Common myeloid progenitor, CD34-positive (primary cell): ENCODE measurements at regions of chr1 and their contacts with region 1.

Region 1: DNA sequence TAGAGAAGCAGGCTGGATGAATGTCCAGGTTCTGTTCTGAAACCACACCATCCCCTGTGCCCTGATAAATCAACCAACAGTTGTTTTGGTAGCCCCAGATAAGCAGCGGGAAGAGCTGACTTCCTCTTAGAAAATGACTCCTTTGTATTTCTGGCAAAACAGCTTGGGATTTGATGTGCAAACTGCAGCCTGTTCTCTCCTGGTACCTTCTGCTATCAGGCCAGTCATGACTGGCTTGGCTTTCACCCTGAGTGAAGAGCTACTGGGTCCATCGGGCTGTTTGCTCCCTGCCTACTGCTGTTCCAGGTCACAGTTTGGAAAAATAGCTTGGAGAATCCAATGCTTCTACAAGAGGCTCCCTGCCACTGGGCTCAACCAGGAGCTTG is 116.8 kb downstream of the DTL start:
- DNase-seq: peak; percentile 86 to 93 (median 90)
- H3K4me3 ChIP-seq: peak overlapping the region in 2 of 7 experiments; percentile 16 to 30
- H3K27ac ChIP-seq: peak overlapping the region in 1 of 2 experiments; percentile 64
- H3K4me1 ChIP-seq: peaks cover 11 to 35% (median 20%) of the 10 kb centered on the region in 4 experiments
- H3K27me3 ChIP-seq: no peaks in the 10 kb centered on the region

Region 2: GRCh38 chr1:212162635-212163034 is 10.3 kb after region 1 on chr1:
- CTCF ChIA-PET with region 1: interaction called, 22 read pairs
- POLR2A ChIA-PET with region 1: no interaction called
- DNase-seq: peak; percentile 40 to 80 (median 77)
- H3K4me3 ChIP-seq: peak overlapping the region in 3 of 7 experiments; percentile 23 to 59 (median 40)
- H3K27ac ChIP-seq: no peak overlapping the region
- H3K4me1 ChIP-seq: peaks cover 15 to 56% (median 54%) of the 10 kb centered on the region in 4 experiments
- H3K27me3 ChIP-seq: no peaks in the 10 kb centered on the region

Region 3: DNA sequence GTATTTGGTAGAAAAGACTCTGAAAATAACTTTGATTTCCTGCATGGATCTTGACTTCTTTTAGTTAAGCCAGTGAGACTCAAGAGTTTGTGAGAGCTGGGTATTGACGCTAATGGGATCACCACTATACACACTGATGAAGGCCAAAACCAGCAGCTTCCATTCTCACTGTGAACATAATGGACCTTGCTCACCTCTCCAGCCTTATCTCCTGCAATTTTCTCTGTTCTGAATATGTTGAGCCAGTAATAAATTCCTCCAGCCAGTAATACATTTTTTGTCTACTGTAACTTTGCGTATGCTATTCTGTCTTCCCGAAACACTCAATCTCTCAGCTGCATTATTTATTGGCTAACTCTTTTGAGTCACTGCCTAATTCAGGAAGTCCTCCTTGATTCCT is 21.3 kb after region 1 on chr1:
- CTCF ChIA-PET with region 1: no interaction called
- POLR2A ChIA-PET with region 1: no interaction called
- DNase-seq: no peak
- H3K4me3 ChIP-seq: no peak overlapping the region
- H3K27ac ChIP-seq: no peak overlapping the region
- H3K4me1 ChIP-seq: no peaks in the 10 kb centered on the region
- H3K27me3 ChIP-seq: no peaks in the 10 kb centered on the region

Region 4: DNA sequence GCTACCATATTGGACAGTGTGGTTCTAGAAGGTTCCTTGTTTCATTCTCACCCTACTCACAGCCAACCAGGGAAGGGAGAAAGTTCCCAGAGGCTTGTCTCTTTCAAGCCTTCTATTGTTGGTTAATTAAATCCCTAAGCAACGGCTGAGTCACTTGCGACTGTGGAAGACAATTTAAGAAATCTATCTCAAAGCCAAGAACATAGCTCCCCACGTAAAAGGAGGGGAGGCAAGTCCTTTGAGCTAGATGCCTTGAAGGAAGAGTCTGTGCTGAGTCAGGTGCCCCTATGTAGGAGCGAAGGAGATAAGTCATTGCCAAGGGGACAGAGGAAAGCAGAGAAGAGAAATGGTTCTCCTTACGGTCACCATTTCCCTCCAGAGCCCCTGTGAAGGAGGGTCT is 53.5 kb after region 1 on chr1:
- CTCF ChIA-PET with region 1: no interaction called
- POLR2A ChIA-PET with region 1: no interaction called
- DNase-seq: no peak
- H3K4me3 ChIP-seq: no peak overlapping the region
- H3K27ac ChIP-seq: no peak overlapping the region
- H3K4me1 ChIP-seq: peaks cover 0 to 4% (median 0%) of the 10 kb centered on the region in 4 experiments
- H3K27me3 ChIP-seq: no peaks in the 10 kb centered on the region